Astrocyte of the cerebellum (primary cell): ENCODE measurements at regions of chr4 and their contacts with region 1.

Region 1: GRCh38 chr4:8594097-8595038 is 1.8 kb downstream of the CPZ start:
- DNase-seq: peak; percentile 59
- H3K4me3 ChIP-seq: peak overlapping the region; percentile 45
- CTCF ChIP-seq: peak; percentile 72

Region 2: DNA sequence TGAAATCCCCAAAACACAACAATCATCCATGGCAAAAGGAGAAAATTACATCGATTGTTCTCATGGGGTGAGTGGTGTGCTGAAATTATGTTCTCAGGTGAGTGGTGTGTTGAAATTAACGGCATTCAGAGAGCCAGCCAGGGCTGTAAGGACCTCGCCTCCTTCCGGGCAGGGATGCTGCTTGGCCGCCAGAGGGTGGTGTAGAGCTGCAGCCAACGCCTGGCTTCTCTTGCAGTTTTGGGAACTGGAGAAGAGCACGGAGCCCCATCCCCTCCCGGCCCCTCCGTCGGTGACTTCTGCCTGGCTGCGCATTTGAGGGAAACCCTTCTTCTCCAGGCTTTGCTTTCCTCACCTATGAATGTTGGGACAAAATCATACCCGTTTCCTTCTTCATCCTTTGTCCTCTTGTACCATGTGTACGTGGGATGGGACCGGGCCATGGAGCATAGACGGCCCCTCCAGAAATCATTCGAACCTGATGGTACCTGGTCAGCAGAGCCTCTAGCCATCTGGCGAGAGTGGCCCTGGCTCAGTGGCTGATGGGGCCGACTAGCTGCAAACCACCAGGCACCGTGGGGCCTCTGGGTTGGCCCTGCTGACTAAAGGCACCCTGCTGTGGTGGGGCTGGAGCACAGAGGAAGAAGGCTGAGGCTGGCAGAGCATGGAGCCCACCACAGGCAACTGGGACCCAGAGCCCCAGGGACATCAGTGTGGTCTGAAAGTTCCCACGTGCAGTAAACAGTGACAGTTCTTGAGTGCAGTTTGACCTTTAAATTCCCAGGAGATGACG is 125.4 kb before region 1 on chr4:
- in situ Hi-C with region 1: loop called (anchors 5 kb)
- DNase-seq: no peak
- H3K4me3 ChIP-seq: no peak overlapping the region
- CTCF ChIP-seq: peak; percentile 98

Region 3: DNA sequence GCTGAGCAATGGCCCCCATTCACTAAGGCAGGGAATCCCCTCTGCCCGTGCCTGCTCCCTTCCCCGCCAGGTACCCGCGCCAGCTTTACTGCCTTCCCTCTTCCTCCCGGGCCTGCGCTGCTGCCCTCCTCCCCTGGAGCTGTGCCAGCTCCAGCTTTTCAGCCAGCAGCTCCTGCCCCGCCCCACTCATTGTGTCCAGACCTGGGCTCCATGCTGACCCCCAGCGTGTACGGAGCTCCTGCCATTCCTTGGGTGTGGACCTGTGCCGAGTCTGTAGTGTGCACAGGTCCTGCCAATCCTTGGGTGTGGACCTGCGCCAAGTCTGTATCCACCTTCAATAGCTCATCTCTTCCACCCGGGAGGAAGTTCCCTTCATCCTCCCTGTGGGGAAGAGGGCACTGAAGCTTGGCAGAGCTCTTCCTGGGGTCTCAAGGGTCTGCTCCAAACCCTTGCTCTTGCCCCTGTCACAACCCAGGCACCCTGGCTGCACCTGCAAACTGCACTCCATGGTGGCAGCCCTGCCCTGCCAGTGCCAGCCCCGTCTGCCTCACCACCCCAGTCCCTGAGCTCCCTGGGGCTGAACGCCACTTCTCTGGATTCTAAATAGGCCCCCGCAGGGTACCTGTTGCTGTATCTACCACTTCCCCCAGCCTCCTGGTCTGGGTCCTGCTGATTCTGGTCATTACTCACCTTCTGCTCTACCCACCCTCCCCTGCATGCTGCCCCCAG is 89.9 kb before region 1 on chr4:
- in situ Hi-C with region 1: loop called (anchors 5 kb)
- DNase-seq: no peak
- H3K4me3 ChIP-seq: no peak overlapping the region
- CTCF ChIP-seq: no peak